Dendritic cell treated with granulocyte-macrophage colony-stimulating factor and Interleukin-4, amounts not matched to agents 40 ng/mL and 50 ng/mL, for 4 days (primary cell): ENCODE measurements at regions of chr3 and their contacts with region 1.

Region 1: DNA sequence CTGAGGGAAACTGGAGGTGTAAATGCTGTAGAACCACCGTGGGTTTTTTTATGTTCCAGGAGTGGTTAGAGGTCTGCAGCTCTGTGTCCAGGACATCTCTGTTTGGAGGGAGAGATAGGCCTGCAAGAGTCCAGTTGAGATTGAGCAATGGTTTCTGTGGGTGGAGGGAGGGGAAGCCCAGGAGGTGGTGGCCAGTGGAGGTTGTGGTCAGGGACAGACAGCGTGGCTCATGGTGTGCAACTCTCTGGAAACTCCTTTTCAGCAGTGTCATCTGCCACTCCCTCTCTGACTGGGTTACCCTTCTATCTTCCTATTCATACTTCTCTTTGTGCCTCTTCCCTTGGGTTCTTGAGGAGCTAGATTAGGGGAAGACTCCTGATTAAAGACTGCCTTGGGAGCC is 9.6 kb downstream of the XCR1 start:
- H3K4me3 Mint-ChIP-seq: no peak overlapping the region
- H3K27ac Mint-ChIP-seq: no peak overlapping the region
- H3K4me1 Mint-ChIP-seq: peaks cover 39% of the 10 kb centered on the region
- H3K27me3 Mint-ChIP-seq: peaks cover 26% of the 10 kb centered on the region

Region 2: GRCh38 chr3:46065294-46065721 is 47.6 kb after region 1 on chr3:
- intact Hi-C with region 1: loop called (anchors 10 kb)
- H3K4me3 Mint-ChIP-seq: no peak overlapping the region
- H3K27ac Mint-ChIP-seq: no peak overlapping the region
- H3K4me1 Mint-ChIP-seq: peaks cover 32% of the 10 kb centered on the region
- H3K27me3 Mint-ChIP-seq: peaks cover 73% of the 10 kb centered on the region